Mammary epithelial cell (primary cell): ENCODE measurements at regions of chr3 and their contacts with region 1.

Region 1: GRCh38 chr3:115638991-115639390 is 15.7 kb downstream of the GAP43 start:
- DNase-seq: no peak
- H3K4me3 ChIP-seq: no peak overlapping the region
- H3K27ac ChIP-seq: no peak overlapping the region
- H3K4me1 ChIP-seq: no peaks in the 10 kb centered on the region
- H3K27me3 ChIP-seq: no peaks in the 10 kb centered on the region
- CTCF ChIP-seq: no peak

Region 2: GRCh38 chr3:115549071-115549470 is 89.9 kb before region 1 on chr3:
- CTCF ChIA-PET with region 1: no interaction called
- dilution Hi-C with region 1: loop called (anchors 5 kb)
- in situ Hi-C with region 1: no loop called
- intact Hi-C with region 1: no loop called
- DNase-seq: no peak
- H3K4me3 ChIP-seq: no peak overlapping the region
- H3K27ac ChIP-seq: no peak overlapping the region
- H3K4me1 ChIP-seq: no peaks in the 10 kb centered on the region
- H3K27me3 ChIP-seq: peaks cover 4% of the 10 kb centered on the region
- CTCF ChIP-seq: no peak

Region 3: DNA sequence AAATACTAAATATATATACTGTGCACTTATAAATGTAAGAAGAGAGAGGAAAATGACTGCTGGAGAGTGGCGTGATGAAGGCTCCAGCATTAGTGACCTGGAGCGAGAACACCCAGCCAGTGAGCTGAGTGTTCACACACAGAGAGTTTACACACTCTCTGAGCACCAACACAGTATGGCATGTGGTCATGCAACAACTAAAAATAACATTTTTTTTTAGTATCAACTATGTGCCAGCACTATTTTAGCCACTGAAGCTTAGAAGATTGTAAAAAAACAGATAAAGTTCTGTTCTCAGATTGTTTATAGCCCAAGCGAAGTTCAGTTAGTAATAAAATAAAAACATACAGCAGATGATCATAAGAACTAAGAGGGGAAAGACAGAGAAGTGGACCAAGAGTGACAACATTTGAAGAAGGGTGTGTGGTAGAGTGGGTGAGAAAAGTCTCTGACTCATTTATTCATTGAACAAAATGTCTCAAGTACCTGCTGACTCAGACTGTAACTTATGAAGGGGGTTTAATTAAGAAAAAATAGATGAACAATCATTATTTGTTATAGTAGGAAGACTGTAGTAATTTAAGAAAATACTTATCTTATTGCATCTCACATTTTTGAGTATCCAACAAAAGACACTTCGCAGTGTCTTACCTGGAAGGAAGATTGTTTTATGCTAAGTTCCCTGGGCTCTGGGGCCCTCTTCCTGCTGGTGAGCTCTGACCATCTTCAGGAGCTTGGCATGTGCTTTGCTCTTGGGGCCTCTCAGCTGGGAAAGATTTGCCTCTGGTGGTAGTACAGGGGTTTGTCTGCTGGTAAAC is 28.1 kb after region 1 on chr3:
- CTCF ChIA-PET with region 1: no interaction called
- dilution Hi-C with region 1: no loop called
- in situ Hi-C with region 1: no loop called
- intact Hi-C with region 1: no loop called
- DNase-seq: peak; percentile 67
- H3K4me3 ChIP-seq: no peak overlapping the region
- H3K27ac ChIP-seq: peak overlapping the region; percentile 41
- H3K4me1 ChIP-seq: peaks cover 16% of the 10 kb centered on the region
- H3K27me3 ChIP-seq: no peaks in the 10 kb centered on the region
- CTCF ChIP-seq: no peak

Region 4: DNA sequence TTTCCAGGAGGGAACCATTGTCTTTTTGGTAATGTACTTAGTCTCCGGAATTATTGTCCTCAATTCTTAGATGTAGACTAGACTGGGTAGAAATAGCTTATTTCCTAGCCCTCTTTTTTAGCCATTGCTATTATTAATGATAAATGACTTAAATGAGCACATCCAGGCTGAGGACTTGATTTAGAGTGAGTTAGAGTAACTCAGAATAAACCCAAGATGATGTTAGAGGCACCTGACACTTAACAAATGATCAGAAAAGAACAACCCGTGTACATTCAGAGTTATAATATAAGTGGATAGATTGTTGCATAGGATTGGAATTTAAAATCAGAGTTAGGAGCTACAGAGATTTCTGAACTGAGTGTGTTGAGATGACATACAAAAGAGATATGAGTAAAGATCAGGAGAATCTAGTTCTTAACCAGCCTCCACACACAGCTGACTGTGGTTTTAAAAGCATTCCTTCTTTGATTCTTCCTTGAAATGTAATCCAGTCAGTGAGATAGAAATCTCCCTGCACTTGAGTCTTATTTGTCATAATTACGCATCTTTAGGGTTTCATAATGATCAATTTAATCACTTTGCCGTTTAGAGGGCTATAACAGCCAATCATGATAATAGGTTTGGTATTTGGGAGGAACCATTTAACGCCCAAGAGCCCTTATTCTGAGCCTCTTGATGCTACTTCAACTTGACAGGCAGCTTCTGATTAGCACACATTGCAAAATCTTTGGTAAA is 350.9 kb after region 1 on chr3:
- CTCF ChIA-PET with region 1: no interaction called
- dilution Hi-C with region 1: no loop called
- in situ Hi-C with region 1: no loop called
- intact Hi-C with region 1: no loop called
- DNase-seq: peak; percentile 72
- H3K4me3 ChIP-seq: no peak overlapping the region
- H3K27ac ChIP-seq: no peak overlapping the region
- H3K4me1 ChIP-seq: no peaks in the 10 kb centered on the region
- H3K27me3 ChIP-seq: no peaks in the 10 kb centered on the region
- CTCF ChIP-seq: no peak